Sciatic nerve (tissue), 2 donors: ENCODE measurements at regions of chr18 and their contacts with region 1.

Region 1: DNA sequence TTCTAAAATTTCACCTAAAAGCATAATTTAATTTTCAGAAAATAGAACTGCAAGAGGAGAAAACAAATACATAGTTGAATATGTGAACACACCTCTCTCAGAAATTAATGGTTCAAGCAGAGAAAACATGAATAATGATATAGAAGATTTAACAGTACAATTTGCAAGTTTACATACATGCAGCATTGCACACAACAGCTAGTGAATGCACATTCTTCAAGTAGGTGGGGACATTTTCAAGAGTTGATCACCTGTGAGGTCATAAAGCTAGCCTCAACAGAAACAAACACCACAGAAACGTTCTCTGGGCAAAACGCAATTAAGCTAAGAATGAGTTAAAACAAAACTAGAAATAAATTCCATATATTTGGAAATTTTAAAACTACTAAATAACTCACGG is 38.1 kb downstream of the TMEM200C start:
- DNase-seq: no peak
- ATAC-seq: no peak

Region 2: GRCh38 chr18:4672152-4672551 is 1185.0 kb before region 1 on chr18:
- intact Hi-C with region 1: loop called (anchors 5 kb)
- DNase-seq: no peak
- ATAC-seq: no peak

Region 3: GRCh38 chr18:5444847-5445246 is 412.3 kb before region 1 on chr18:
- intact Hi-C with region 1: no loop called
- DNase-seq: no peak
- ATAC-seq: no peak